Left ventricle myocardium superior (tissue), 1 donor: ENCODE measurements at regions of chr1 and their contacts with region 1.

Region 1: DNA sequence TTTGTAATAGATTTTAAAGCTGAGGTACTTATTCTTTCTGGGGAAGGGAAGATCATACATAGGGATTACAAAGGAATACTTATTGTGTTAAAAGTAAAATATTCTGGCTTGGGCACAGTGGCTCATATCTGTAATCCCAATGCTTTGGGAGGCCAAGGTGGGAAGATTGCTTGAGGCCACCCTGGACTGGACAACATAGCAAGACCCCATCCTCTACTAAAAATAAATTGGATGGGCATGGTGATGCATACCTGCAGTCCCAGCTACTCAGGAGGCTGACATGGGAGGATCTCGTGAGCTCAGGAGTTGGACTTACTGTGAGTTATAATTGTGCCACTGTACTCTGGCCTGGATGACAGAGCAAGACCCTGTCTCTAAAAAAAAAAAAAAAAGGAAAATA is 27.6 kb downstream of the GABPB2 start:
- DNase-seq: no peak
- ATAC-seq: no peak

Region 2: DNA sequence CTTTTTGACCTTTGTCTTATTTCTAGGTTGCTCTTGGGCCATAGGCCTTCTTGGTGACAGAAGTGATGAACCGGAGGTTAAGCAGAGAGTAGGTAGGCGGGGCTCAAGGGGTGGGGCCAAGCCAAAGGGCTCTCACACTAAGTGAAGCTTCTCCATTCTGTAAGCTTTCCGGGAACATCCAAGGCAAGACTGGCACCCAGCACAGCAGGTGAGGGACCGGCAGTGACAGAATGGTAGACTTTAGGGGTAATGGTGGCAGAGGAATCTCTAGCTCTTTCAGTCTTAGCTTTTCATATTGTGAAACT is 58.3 kb after region 1 on chr1 and contains the start of gene TNFAIP8L2:
- intact Hi-C with region 1: loop called (anchors 5 kb)
- DNase-seq: peak; percentile 73
- ATAC-seq: peak; percentile 65
- total RNA-seq, gene TNFAIP8L2: 1.4 TPM